ENCODE measurements at regions of chr13 and their contacts with region 1.

Region 1: DNA sequence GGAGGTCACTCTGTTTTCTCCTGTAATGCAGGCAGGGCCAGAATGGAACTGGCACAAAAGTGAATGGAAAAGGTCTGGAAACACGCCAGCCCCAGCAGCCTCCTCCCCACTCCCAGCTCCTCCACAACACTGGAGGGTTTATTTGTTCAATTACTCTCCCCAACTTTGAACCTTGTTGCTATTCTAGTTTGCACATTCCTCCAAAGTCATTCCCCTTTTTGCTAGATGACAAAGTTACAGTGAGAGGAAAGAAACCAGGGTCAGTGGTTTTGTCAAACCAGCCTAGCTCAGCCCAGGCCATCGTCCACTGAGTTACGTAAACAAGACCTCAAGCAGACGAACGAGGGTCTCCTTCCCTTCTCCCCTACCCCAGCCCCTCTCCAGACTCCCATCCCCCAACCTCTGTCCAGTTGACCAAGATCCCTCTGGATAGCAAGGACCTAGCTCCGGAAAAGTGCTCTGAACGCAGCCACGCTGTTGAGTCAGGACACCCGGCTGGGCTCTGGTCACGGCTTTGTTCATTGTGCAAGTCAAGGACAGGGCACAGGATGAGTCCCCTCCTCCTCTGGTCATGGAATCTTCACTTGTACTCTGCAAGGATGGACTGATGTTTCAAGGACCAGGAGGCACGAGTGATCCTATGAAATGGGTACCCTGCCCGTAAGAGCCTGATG is 180.0 kb downstream of the USP12 start:
- DNase-seq: peak in 1 of 2 donors; percentile 83
- ATAC-seq: no peak
- H3K4me3 ChIP-seq: no peak overlapping the region
- H3K27ac ChIP-seq: no peak overlapping the region
- H3K4me1 ChIP-seq: no peaks in the 10 kb centered on the region
- H3K27me3 ChIP-seq: no peaks in the 10 kb centered on the region

Region 2: DNA sequence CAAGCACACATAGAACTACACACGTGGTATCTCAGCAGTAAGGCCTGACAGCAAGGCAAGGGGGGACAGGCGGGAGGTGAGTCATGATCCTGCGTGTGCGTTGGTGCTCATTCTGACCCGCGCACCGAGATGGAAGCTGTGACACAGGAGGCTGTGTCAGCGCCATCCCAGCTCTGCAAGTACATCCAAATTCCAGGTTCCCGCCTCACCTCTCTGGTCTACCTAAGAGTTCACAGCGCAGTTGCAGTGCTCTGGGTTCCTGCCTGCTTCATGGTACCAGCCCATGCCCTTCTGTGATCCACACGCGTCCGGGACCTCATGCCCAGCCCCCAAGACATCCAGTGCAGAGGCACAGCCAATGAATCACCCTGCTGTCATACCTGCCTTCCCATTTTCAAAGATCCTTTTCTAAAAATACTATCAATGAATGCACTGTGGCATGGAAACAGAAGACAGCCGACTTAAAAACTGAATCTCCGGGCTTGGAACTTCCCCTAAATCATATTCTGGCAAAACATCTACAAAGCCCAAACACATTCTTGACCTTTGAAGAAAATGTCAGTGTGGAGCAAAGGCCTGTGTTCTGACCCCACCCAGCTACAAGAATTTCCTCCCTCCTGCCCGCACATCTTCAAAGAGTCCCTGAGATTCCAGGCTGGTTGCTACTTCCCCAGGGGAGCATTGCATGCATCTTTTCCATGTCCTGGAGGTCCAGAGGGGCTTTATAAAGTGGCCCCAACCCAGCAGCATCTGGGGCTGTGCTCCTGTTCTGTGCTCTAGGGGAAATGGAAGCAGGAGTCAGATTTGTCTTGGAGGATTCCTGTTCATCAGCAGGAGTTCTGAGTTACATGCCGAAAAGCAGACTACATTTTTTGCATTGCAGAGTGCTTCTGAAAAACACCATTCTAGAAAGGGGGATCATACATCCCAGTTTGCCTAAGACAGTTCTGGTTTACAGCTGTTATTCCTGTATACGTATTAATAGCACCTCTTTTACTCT is 44.6 kb after region 1 on chr13:
- intact Hi-C with region 1: loop called in 1 of 2 experiments (anchors 5 kb)
- DNase-seq: no peak
- ATAC-seq: no peak
- H3K4me3 ChIP-seq: no peak overlapping the region
- H3K27ac ChIP-seq: no peak overlapping the region
- H3K4me1 ChIP-seq: no peaks in the 10 kb centered on the region
- H3K27me3 ChIP-seq: peaks cover 0 to 1% of the 10 kb centered on the region in 2 donors

Region 3: GRCh38 chr13:27354379-27354778 is 362.7 kb after region 1 on chr13:
- intact Hi-C with region 1: loop called in 1 of 2 experiments (anchors 2 kb)
- DNase-seq: no peak
- ATAC-seq: no peak
- H3K4me3 ChIP-seq: no peak overlapping the region
- H3K27ac ChIP-seq: no peak overlapping the region
- H3K4me1 ChIP-seq: no peaks in the 10 kb centered on the region
- H3K27me3 ChIP-seq: no peaks in the 10 kb centered on the region

Measured in aorta (tissue), 5 donors.